Aorta (tissue), 5 donors: ENCODE measurements at regions of chr13 and their contacts with region 1.

Region 1: DNA sequence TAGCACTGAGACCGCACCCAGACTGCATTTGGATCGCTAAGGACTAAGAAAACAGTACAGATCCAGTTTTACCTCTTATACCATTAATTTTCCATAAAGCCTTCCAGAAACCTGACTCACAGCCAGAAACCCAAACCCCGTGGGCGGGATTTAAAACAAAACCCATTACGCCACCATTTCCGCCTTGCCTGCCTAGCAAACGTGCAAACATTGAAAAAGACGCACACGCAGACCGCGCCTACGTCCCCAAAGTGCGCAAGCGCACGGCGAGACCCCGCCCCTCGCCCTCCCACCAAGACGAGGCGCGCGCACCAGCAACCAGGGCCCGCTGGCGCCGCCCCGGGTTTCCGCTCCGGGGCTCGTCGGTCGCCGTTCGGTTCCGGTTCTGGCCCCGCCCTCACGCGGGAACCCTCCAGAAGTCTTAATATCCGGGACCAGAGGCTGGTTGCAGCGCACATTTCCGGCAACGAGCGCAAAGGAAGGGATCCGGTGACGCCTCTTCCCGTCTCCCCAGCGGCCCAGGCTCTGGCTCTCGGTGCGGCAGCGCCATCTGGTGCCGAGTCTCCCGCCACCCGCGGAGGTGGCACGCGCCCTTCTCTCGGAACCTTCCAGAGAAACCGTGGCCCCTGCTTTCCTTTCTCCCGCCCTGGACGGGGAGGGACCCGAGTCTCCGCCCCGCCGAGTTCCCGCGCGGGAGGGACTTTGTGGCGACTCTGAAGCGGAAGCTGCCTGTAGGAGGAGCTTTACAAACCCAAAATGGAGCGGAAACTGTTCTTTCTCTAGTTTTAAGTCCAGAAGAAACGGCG is 256.9 kb upstream of the STARD13 start:
- DNase-seq: peak; percentile 99
- ATAC-seq: peak; percentile 98
- H3K4me3 ChIP-seq: peak overlapping the region; percentile 54 to 75
- H3K27ac ChIP-seq: peak overlapping the region; percentile 95 to 100
- H3K4me1 ChIP-seq: peaks cover 2 to 7% of the 10 kb centered on the region in 2 donors
- H3K27me3 ChIP-seq: no peaks in the 10 kb centered on the region

Region 2: GRCh38 chr13:32586080-32586900 is 956.2 kb before region 1 on chr13 and contains the start of gene PDS5B:
- intact Hi-C with region 1: loop called (anchors 1 to 10 kb)
- DNase-seq: peak; percentile 96 to 97
- ATAC-seq: peak; percentile 99
- H3K4me3 ChIP-seq: peak within 1 kb of the TSS; percentile 94 to 95
- H3K27ac ChIP-seq: peak within 1 kb of the TSS; percentile 80 to 84
- H3K4me1 ChIP-seq: peaks cover 0 to 2% of the 10 kb centered on the region in 2 donors
- H3K27me3 ChIP-seq: no peaks in the 10 kb centered on the region
- total RNA-seq, gene PDS5B: 46.2 to 52.9 TPM

Region 3: GRCh38 chr13:33110713-33111413 is 431.6 kb before region 1 on chr13:
- intact Hi-C with region 1: loop called in 1 of 2 experiments (anchors 5 kb)
- DNase-seq: peak in 1 of 2 donors; percentile 84
- ATAC-seq: peak; percentile 73
- H3K4me3 ChIP-seq: no peak overlapping the region
- H3K27ac ChIP-seq: peak overlapping the region; percentile 59 to 72
- H3K4me1 ChIP-seq: peaks cover 6 to 11% of the 10 kb centered on the region in 2 donors
- H3K27me3 ChIP-seq: no peaks in the 10 kb centered on the region

Region 4: DNA sequence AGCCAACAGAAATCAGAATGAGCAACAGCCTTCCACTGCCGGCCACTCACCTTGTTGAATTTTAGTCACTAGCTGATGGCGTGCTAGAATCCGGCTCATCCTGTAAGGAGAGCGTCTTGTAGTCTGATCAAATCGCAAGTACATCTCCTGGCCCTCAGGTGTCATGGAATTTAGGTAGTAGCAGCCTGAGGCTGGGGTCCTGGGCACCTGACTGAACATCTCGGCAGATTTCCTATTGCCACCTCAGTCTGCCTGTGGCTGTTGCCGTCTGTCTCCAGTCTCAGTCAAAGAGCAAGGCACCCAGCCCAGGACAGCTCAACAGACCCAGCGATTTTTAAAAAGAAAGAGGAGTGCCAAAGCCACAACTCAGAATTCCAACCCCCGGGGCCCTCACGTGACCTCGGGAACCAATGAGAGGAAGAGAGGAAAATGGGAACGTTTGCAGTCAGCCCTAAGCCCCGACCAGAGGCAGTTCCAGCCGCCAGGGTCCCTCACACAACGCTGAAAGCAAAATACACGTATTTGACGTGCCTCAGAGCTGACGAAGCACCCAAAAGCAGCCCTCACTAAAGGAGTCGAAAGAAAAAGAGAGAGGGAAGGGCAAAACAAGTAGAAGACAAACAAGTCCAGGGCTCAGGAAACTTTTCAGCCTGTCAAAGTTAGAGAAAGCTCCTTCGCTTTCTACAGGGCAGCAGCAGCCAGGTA is 256.9 kb before region 1 on chr13 and contains the start of gene STARD13:
- intact Hi-C with region 1: loop called (anchors 1 to 2 kb)
- DNase-seq: peak; percentile 95 to 96
- ATAC-seq: peak; percentile 96
- H3K4me3 ChIP-seq: peak within 1 kb of the TSS; percentile 85 to 100
- H3K27ac ChIP-seq: peak within 1 kb of the TSS; percentile 94 to 100
- H3K4me1 ChIP-seq: peaks cover 2 to 3% of the 10 kb centered on the region in 2 donors
- H3K27me3 ChIP-seq: no peaks in the 10 kb centered on the region
- total RNA-seq, gene STARD13: 62.4 to 85.5 TPM

Region 5: GRCh38 chr13:33454844-33455705 is 87.4 kb before region 1 on chr13:
- intact Hi-C with region 1: loop called in 1 of 2 experiments (anchors 5 kb)
- DNase-seq: no peak
- ATAC-seq: peak; percentile 58
- H3K4me3 ChIP-seq: no peak overlapping the region
- H3K27ac ChIP-seq: peak overlapping the region; percentile 83 to 87
- H3K4me1 ChIP-seq: peaks cover 7 to 12% of the 10 kb centered on the region in 2 donors
- H3K27me3 ChIP-seq: no peaks in the 10 kb centered on the region

Region 6: GRCh38 chr13:33509642-33510229 is 32.8 kb before region 1 on chr13:
- intact Hi-C with region 1: loop called in 1 of 2 experiments (anchors 1 kb)
- DNase-seq: peak; percentile 50 to 63
- ATAC-seq: peak; percentile 81
- H3K4me3 ChIP-seq: no peak overlapping the region
- H3K27ac ChIP-seq: peak overlapping the region; percentile 80 to 100
- H3K4me1 ChIP-seq: peaks cover 3 to 8% of the 10 kb centered on the region in 2 donors
- H3K27me3 ChIP-seq: no peaks in the 10 kb centered on the region

Region 7: GRCh38 chr13:33519561-33520467 is 22.7 kb before region 1 on chr13:
- intact Hi-C with region 1: no loop called
- DNase-seq: no peak
- ATAC-seq: no peak
- H3K4me3 ChIP-seq: no peak overlapping the region
- H3K27ac ChIP-seq: peak overlapping the region in 1 of 2 donors; percentile 67
- H3K4me1 ChIP-seq: no peaks in the 10 kb centered on the region
- H3K27me3 ChIP-seq: no peaks in the 10 kb centered on the region